ENCODE measurements at regions of chr6 and their contacts with region 1.

Region 1: DNA sequence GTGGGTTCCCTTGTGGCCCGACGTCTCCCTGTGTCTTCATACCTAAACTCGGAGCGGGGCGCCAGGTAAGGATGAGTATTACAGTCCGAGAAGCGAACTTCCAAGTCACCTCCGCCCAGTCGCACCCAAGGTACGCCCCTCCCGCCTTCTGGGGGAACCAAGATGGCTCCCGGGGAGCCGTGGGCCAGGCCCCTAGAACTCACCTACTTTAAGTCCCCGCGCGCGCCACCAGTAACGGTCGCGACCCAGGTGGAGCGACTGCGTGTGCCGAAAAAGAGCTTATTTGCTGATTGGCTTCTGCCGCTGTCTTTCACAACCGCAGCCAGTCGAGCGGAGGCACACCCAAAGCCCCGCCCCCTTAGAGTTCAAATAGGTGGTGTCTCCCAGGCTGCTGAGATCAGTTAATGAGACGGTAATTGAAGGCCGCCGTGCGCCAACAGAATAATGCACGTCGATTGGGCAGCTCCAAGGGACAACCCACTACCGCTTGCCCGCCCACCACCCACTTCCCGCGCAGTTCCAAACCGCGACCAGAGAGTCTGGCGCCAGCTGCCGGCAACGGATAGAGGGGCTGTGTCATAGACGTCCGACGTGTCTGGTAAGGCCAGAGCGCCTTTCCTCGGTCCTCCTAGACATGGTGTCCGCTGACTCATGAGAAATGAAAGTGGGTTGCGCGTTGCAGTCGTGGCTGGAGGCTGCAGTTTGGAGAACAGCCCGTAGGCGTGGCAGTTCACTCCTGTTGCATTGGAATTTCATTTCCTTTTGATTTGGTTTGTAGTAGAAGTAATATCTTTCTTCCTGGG is at the start of gene MDC1:
- DNase-seq: peak; percentile 98 to 100 (median 100)

Region 2: GRCh38 chr6:30571075-30571768 is 146.0 kb before region 1 on chr6 and contains the start of gene ABCF1:
- intact Hi-C with region 1: no loop called
- DNase-seq: peak; percentile 98 to 100 (median 99)

Region 3: GRCh38 chr6:30626484-30627366 is 90.5 kb before region 1 on chr6 and contains the start of gene ATAT1:
- intact Hi-C with region 1: no loop called
- DNase-seq: peak; percentile 89 to 99 (median 94)

Region 4: GRCh38 chr6:30646458-30647241 is 70.6 kb before region 1 on chr6 and contains the start of gene C6orf136:
- intact Hi-C with region 1: loop called (anchors 2 kb)
- DNase-seq: peak; percentile 89 to 99 (median 93)

Region 5: DNA sequence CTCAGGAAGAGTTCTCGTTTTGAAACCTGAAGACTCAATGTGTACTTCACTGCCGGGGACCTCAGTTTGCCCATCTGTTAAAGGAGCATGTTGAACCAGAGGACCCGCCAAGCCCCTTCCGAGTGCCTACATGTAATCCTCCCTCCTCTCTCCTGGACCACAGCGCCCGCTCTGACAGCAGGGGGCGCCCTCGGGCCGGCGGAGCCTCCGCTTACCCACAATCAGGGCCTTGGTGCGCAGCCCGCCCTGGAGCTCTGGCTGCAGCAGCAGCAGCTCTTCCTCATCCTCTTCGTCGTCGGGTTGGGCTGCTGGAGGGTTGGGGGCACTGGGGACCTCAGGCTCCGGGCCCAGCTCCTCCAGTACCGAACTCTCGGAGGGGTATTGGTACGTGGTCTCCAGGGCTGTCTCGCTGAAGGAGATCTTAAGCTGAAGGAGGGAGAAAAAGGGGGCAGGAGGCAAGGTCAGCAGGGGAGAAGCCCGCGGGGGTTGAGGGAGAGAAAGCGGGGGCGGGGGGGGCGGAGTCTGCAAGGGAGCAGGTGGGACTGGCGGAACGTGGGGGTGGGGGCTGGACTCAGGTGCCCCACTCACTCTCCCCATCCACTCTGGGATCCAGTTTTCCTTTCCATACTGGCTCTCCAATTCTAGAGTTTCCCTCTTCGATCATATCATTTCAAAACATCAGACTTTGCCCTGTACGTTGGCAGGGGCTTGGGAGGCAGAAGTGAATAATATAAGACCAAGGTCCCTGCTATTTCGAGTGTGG is 38.1 kb before region 1 on chr6:
- intact Hi-C with region 1: loop called (anchors 1 kb)
- DNase-seq: peak; percentile 75 to 98 (median 90)

Measured in posterior cingulate gyrus (tissue), 11 donors.